ENCODE measurements at regions of chr1 and their contacts with region 1.

Region 1: GRCh38 chr1:60560701-60561100 is 487.1 kb upstream of the C1orf87 start:
- DNase-seq: no peak
- H3K4me3 ChIP-seq: no peak overlapping the region
- H3K27ac ChIP-seq: no peak overlapping the region
- H3K4me1 ChIP-seq: no peaks in the 10 kb centered on the region
- H3K27me3 ChIP-seq: no peaks in the 10 kb centered on the region
- CTCF ChIP-seq: no peak

Region 2: DNA sequence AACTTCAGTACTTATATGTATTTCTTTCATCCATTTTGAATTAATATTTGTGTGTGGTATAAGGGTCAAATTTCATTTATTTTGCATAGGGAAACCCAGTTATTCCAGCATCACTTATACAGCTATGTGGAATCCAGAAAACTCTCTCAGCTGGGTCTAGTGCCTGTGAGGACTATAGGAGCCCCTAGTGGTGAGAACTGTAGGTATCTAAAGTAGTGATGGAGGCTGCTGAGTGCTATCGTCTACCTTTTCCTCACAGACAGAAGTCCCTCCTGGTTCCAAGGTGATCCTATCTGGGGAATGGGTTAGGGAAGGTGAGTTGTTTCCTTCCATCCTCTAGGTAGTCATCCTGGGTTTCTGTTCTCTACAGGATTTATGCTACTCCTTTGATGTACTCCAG is 135.2 kb before region 1 on chr1:
- CTCF ChIA-PET with region 1: no interaction called
- POLR2A ChIA-PET with region 1: no interaction called
- intact Hi-C with region 1: no loop called
- DNase-seq: no peak
- H3K4me3 ChIP-seq: no peak overlapping the region
- H3K27ac ChIP-seq: no peak overlapping the region
- H3K4me1 ChIP-seq: no peaks in the 10 kb centered on the region
- H3K27me3 ChIP-seq: no peaks in the 10 kb centered on the region
- CTCF ChIP-seq: peak; percentile 59

Region 3: DNA sequence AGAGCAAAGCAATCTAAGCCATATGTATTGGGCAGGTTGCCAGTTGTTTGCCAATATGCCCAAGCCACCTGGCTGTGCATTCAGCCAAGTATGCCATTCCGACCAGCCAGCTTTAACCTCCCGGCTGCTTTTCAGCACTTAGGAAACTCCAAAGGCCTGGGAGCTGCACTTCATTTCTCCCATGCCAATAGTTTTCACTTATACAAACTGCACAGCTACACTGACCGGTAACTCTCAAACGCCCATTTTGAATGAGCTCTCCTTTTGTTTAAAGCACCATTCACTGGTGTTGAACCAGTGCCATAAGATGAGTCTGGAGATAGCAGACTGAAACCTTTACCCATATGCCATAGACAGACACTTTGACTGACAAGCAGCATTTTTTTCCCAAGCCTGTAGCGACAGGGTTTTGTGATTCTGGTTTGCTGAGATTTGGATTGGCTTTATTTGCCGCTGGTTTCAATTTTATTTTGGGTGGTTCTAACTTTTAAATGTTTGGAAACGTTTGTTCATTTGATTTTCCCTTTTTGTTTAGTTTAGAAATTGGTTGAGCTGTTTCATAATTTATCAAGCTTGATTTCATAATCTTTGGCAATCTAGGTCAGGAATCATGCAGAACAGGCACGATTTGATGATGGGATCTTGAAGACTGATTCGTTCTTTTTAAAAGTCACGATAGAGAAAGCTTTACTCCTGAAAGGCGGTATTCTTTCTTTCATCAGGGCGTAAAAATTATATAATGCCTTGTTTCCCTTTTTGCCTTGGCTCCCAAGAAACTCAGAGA is 666.3 kb after region 1 on chr1:
- CTCF ChIA-PET with region 1: no interaction called
- POLR2A ChIA-PET with region 1: interaction called, 13 read pairs
- intact Hi-C with region 1: no loop called
- DNase-seq: no peak
- H3K4me3 ChIP-seq: no peak overlapping the region
- H3K27ac ChIP-seq: no peak overlapping the region
- H3K4me1 ChIP-seq: peaks cover 13% of the 10 kb centered on the region
- H3K27me3 ChIP-seq: no peaks in the 10 kb centered on the region
- CTCF ChIP-seq: no peak

Region 4: DNA sequence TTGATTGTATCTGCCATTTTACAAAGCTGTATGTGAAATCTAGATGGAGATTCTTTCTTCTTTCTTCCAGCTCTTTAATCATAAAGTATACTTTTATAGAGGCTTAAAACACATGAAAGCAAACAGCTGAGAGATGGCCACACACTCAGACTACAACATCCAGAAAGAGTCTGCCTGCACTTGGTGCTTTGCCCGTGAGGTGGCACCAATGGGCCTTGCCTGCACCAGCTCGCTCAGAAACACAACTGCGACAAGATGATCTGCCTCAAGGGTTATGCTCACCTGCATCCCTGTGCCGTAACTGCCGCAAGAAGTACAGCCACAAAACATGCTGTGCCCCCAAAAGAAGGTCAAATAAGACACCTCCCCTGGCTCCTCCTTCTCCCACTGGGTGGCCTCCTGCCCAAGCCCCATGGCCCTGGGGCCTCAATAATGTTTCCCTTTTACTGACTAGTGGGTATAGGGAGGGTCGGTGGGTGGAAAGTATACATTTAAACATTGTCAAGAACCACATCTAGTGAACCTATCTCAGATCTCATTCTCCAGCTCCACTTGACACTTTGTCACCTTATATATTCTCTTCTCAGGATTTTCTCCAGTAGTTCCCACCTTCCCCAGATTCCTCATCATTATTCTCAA is 1969.9 kb after region 1 on chr1:
- CTCF ChIA-PET with region 1: no interaction called
- POLR2A ChIA-PET with region 1: no interaction called
- intact Hi-C with region 1: no loop called
- DNase-seq: no peak
- H3K4me3 ChIP-seq: no peak overlapping the region
- H3K27ac ChIP-seq: no peak overlapping the region
- H3K4me1 ChIP-seq: no peaks in the 10 kb centered on the region
- H3K27me3 ChIP-seq: no peaks in the 10 kb centered on the region
- CTCF ChIP-seq: no peak